Right cardiac atrium (tissue), 5 donors: ENCODE measurements at regions of chr6 and their contacts with region 1.

Region 1: GRCh38 chr6:107114213-107114905 is 956 bp downstream of the BEND3 start:
- DNase-seq: peak; percentile 90 to 96 (median 96)
- ATAC-seq: peak; percentile 97
- H3K4me3 ChIP-seq: peak overlapping the region; percentile 100
- H3K27ac ChIP-seq: peak overlapping the region; percentile 39
- H3K4me1 ChIP-seq: peaks cover 3% of the 10 kb centered on the region
- H3K27me3 ChIP-seq: no peaks in the 10 kb centered on the region

Region 2: DNA sequence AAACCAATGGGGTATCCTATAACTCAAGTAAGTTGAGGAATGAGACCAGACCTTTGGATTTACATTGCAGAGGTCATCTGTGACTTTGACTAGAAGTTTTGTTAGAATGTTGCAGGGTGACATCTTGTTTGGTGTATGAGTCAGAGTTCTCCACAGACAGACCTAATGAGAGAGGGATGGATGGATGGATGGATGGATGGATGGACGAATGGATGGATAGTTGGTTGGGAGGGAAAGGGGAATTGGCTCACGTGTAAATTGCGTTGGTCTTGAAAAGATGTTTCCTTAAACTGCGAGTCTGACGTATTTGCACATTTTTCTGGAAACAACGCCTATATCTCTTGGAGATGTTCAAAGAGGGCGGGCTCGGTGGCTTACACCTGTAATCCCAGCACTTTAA is 87.4 kb before region 1 on chr6:
- intact Hi-C with region 1: loop called in 1 of 4 experiments (anchors 5 kb)
- DNase-seq: no peak
- ATAC-seq: no peak
- H3K4me3 ChIP-seq: no peak overlapping the region
- H3K27ac ChIP-seq: no peak overlapping the region
- H3K4me1 ChIP-seq: peaks cover 2% of the 10 kb centered on the region
- H3K27me3 ChIP-seq: no peaks in the 10 kb centered on the region

Region 3: GRCh38 chr6:108200631-108201030 is 1086.3 kb after region 1 on chr6:
- intact Hi-C with region 1: no loop called
- DNase-seq: no peak
- ATAC-seq: no peak
- H3K4me3 ChIP-seq: no peak overlapping the region
- H3K27ac ChIP-seq: no peak overlapping the region
- H3K4me1 ChIP-seq: no peaks in the 10 kb centered on the region
- H3K27me3 ChIP-seq: no peaks in the 10 kb centered on the region